ENCODE measurements at regions of chr11 and their contacts with region 1.

Region 1: GRCh38 chr11:61149624-61150619 is 11.3 kb downstream of the VPS37C start:
- DNase-seq: no peak
- ATAC-seq: no peak
- H3K4me3 ChIP-seq: no peak overlapping the region
- H3K4me3 Mint-ChIP-seq: no peak overlapping the region
- H3K27ac ChIP-seq: no peak overlapping the region
- H3K27ac Mint-ChIP-seq: no peak overlapping the region
- H3K4me1 ChIP-seq: peaks cover 0 to 10% of the 10 kb centered on the region in 2 experiments
- H3K4me1 Mint-ChIP-seq: peaks cover 12 to 40% (median 19%) of the 10 kb centered on the region in 3 donors
- H3K27me3 ChIP-seq: no peaks in the 10 kb centered on the region
- H3K27me3 Mint-ChIP-seq: no peaks in the 10 kb centered on the region

Region 2: DNA sequence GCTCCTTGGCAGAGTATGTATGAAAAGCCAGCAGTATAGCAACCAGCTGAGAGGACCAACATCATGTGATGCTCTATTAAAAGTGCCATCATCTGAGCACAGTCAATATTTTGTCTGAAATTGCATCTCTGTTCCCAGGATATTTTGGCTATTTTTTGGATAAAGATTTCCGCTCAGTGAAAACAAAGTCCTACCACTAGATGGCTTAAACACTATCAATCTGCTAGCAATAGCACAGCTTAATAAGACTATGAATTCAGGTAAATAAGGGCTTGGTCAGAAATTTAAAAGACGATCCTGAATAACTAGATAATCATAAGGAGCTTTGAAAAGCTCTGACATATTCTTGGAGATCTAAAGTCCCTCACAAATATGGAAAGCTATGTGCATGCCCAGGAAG is 560.3 kb before region 1 on chr11:
- CTCF ChIA-PET with region 1: no interaction called
- POLR2A ChIA-PET with region 1: no interaction called
- DNase-seq: no peak
- ATAC-seq: no peak
- H3K4me3 ChIP-seq: no peak overlapping the region
- H3K4me3 Mint-ChIP-seq: no peak overlapping the region
- H3K27ac ChIP-seq: no peak overlapping the region
- H3K27ac Mint-ChIP-seq: no peak overlapping the region
- H3K4me1 ChIP-seq: no peaks in the 10 kb centered on the region
- H3K4me1 Mint-ChIP-seq: no peaks in the 10 kb centered on the region
- H3K27me3 ChIP-seq: peaks cover 0 to 1% of the 10 kb centered on the region in 2 experiments
- H3K27me3 Mint-ChIP-seq: no peaks in the 10 kb centered on the region

Region 3: DNA sequence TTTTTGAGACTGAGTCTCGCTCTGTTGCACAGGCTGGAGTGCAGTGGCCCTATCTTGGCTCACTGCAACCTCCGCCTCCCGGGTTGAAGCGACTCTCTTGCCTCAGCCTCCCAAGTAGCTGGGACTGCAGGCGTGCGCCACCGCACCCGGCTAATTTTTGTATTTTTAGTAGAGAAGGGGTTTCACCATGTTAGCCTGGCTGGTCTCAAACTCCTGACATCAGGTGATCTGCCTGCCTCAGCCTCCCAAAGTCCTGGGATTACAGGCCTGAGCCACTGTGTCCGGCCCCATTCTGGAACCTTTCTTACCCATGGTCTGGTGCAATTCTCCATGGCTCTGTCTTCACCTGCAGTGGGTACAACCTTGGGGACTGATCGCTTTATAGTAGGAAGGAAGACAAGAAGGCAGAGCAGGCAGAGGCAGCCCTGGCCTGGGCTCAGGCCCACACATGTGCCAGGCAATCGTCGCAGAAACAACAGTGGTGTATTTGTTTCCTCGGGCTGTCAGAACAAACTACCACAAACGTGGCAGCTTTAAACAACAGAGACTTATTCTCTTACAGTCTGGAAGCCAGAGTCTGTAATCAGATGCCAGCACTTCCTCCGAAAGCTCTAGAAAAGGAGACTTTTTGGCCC is 290.2 kb before region 1 on chr11:
- CTCF ChIA-PET with region 1: no interaction called
- POLR2A ChIA-PET with region 1: interaction called in 1 of 2 experiments, 10 read pairs
- DNase-seq: no peak
- ATAC-seq: no peak
- H3K4me3 ChIP-seq: no peak overlapping the region
- H3K4me3 Mint-ChIP-seq: peak overlapping the region in 1 of 3 donors; percentile 36
- H3K27ac ChIP-seq: no peak overlapping the region
- H3K27ac Mint-ChIP-seq: no peak overlapping the region
- H3K4me1 ChIP-seq: peaks cover 6 to 13% of the 10 kb centered on the region in 2 experiments
- H3K4me1 Mint-ChIP-seq: peaks cover 21 to 24% (median 23%) of the 10 kb centered on the region in 3 donors
- H3K27me3 ChIP-seq: peaks cover 0 to 2% of the 10 kb centered on the region in 2 experiments
- H3K27me3 Mint-ChIP-seq: no peaks in the 10 kb centered on the region

Measured in T-cell (primary cell).